ENCODE measurements at regions of chr7 and their contacts with region 1.

Region 1: GRCh38 chr7:2104107-2104710 is 128.5 kb downstream of the MAD1L1 start:
- DNase-seq: peak; percentile 28 to 81 (median 58)
- ATAC-seq: peak; percentile 59
- H3K4me3 ChIP-seq: peak overlapping the region; percentile 7
- H3K4me3 Mint-ChIP-seq: peak overlapping the region; percentile 25
- H3K27ac ChIP-seq: no peak overlapping the region
- H3K27ac Mint-ChIP-seq: peak overlapping the region; percentile 63
- H3K4me1 ChIP-seq: peaks cover 17% of the 10 kb centered on the region
- H3K4me1 Mint-ChIP-seq: peaks cover 33% of the 10 kb centered on the region
- H3K27me3 ChIP-seq: no peaks in the 10 kb centered on the region
- H3K27me3 Mint-ChIP-seq: no peaks in the 10 kb centered on the region
- CTCF ChIP-seq: peak; percentile 44

Region 2: DNA sequence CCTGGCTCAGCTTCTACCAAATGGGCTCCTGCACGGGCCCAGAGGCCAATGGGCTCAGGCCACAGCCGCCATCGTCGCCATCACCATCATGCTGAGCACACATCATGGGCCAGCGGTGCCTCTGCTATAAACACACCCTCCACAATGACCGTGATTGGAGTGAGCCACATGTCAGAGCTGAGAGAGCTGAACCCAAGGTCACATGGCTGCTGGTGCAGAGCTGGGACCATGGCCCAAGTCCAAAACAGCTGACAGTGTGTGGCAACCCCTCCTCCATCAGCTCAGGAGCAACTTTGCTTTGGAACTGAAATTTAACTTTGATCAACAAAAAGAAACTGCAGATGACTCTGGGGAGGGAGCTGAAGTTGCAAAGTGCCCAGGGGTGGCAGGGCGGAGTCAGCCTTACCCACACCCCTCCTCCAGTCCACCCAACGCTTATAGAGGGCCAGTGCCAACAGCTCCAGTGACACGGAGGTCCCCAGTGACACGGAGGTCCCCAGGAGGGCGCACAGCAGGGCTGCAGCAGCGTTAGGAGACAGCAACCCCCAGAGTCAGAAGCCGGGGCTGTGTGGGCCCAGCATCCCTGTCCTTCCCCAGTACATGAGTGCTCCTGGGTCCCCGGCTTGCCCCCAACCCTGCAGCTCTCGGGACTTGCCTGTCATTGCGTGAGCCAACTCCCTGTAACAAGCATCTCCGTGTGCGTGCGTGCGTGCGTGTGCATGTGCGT is 184.5 kb before region 1 on chr7:
- CTCF ChIA-PET with region 1: no interaction called
- POLR2A ChIA-PET with region 1: no interaction called
- intact Hi-C with region 1: loop called in 1 of 2 experiments (anchors 10 kb)
- DNase-seq: peak in 3 of 14 experiments; percentile 31 to 47 (median 42)
- ATAC-seq: peak; percentile 25
- H3K4me3 ChIP-seq: peak overlapping the region; percentile 46
- H3K4me3 Mint-ChIP-seq: peak overlapping the region; percentile 86
- H3K27ac ChIP-seq: no peak overlapping the region
- H3K27ac Mint-ChIP-seq: peak overlapping the region; percentile 92
- H3K4me1 ChIP-seq: peaks cover 80% of the 10 kb centered on the region
- H3K4me1 Mint-ChIP-seq: peaks cover 73% of the 10 kb centered on the region
- H3K27me3 ChIP-seq: no peaks in the 10 kb centered on the region
- H3K27me3 Mint-ChIP-seq: no peaks in the 10 kb centered on the region
- CTCF ChIP-seq: no peak

Region 3: GRCh38 chr7:2393706-2394105 is 289.5 kb after region 1 on chr7:
- CTCF ChIA-PET with region 1: no interaction called
- POLR2A ChIA-PET with region 1: no interaction called
- intact Hi-C with region 1: loop called in 1 of 2 experiments (anchors 5 kb)
- DNase-seq: no peak
- ATAC-seq: no peak
- H3K4me3 ChIP-seq: no peak overlapping the region
- H3K4me3 Mint-ChIP-seq: no peak overlapping the region
- H3K27ac ChIP-seq: no peak overlapping the region
- H3K27ac Mint-ChIP-seq: no peak overlapping the region
- H3K4me1 ChIP-seq: no peaks in the 10 kb centered on the region
- H3K4me1 Mint-ChIP-seq: no peaks in the 10 kb centered on the region
- H3K27me3 ChIP-seq: no peaks in the 10 kb centered on the region
- H3K27me3 Mint-ChIP-seq: no peaks in the 10 kb centered on the region
- CTCF ChIP-seq: no peak